ENCODE measurements at regions of chr19 and their contacts with region 1.

Region 1: DNA sequence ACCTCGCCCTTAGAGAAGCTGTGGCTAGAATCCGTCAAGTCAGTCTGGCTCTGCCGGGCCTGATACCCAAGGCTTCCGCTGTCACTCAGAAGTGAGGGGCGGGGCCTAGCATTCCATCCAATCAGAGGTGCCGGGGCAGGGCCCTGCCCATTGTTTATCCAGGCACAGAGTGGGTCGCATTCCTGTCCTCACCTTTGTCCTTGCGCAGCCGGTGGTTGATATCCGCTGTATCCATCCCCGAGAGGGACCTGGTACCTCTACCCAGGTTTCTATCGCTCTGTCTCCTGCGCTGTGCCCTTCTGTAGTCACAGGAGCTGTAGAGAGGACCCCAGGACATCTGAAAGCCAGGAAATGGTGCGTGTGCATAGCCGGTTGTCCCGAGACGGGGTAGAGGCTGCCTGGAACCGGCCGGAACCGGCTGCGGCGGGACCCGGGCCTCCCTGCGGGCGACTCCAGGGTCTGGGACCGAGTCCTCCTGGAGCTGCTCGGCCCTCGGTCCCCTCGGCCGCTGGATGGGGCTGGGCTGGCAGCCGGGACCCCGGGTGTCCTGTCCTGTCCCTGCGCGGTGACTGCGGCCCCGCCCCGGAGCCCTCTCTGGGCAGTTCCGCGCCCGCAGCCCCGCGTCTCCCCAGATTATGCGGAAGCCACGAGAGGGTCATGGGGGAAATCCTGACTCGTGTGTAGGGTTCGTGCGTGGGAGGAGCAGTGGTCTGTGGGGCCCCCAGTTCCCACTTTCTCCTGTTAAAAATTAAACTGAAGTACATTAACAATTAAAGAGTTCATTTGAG is at the start of gene ZNF763:
- DNase-seq: peak; percentile 97
- H3K4me3 ChIP-seq: peak within 1 kb of the TSS; percentile 59 to 63
- H3K27ac ChIP-seq: peak within 1 kb of the TSS; percentile 93 to 96
- H3K4me1 ChIP-seq: peaks cover 0 to 27% (median 14%) of the 10 kb centered on the region in 4 donors
- H3K27me3 ChIP-seq: no peaks in the 10 kb centered on the region
- CTCF ChIP-seq: peak in 1 of 2 experiments; percentile 1

Region 2: GRCh38 chr19:11987405-11988281 is 22.6 kb after region 1 on chr19:
- intact Hi-C with region 1: loop called (anchors 2 kb)
- DNase-seq: peak; percentile 98 to 99
- H3K4me3 ChIP-seq: peak overlapping the region; percentile 69 to 79
- H3K27ac ChIP-seq: peak overlapping the region; percentile 81 to 86
- H3K4me1 ChIP-seq: no peaks in the 10 kb centered on the region
- H3K27me3 ChIP-seq: no peaks in the 10 kb centered on the region
- CTCF ChIP-seq: peak in 1 of 2 experiments; percentile 13

Region 3: DNA sequence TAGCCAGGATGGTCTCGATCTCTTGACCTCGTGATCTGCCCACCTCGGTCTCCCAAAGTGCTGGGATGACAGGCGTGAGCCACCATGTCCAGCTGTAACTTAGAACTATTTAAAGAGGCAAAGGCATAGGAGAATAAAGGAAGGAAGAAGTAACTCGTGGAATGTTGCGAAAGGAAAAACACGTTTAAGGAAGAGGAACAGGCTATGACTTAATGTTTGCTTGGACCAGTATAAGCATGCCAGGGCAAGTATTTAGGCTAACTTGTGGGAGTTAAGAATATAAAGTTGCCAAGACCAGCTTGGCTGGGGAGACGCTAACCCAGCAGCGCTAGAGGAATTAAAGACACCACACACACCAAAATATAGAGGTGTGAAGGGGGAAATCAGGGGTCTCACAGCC is 133.0 kb after region 1 on chr19:
- intact Hi-C with region 1: no loop called
- DNase-seq: no peak
- H3K4me3 ChIP-seq: no peak overlapping the region
- H3K27ac ChIP-seq: no peak overlapping the region
- H3K4me1 ChIP-seq: peaks cover 0 to 5% (median 0%) of the 10 kb centered on the region in 4 donors
- H3K27me3 ChIP-seq: no peaks in the 10 kb centered on the region
- CTCF ChIP-seq: no peak

Measured in tibial artery (tissue), 4 donors.